HepG2 (cell line): ENCODE measurements at regions of chr22 and their contacts with region 1.

Region 1: GRCh38 chr22:50341977-50342650 is 1.0 kb upstream of the PPP6R2 start:
- DNase-seq: peak; percentile 83
- ATAC-seq: peak; percentile 80
- H3K4me3 ChIP-seq: peak overlapping the region; percentile 81 to 86 (median 83)
- H3K27ac ChIP-seq: peak overlapping the region; percentile 56
- H3K4me1 ChIP-seq: peaks cover 45% of the 10 kb centered on the region
- H3K27me3 ChIP-seq: no peaks in the 10 kb centered on the region
- CTCF ChIP-seq: peak; percentile 93
- EP300 ChIP-seq: 0 out of 4 replicates have a peak, but pooled peaks of 1 of the 2 experiments have one; percentile 17
- POLR2A ChIP-seq: 0 out of 4 replicates have a peak, but pooled peaks of 1 of the 2 experiments have one; percentile 6
- RAD21 ChIP-seq: peak; percentile 92

Region 2: GRCh38 chr22:50244420-50245213 is 97.5 kb before region 1 on chr22 and contains the start of gene TUBGCP6:
- CTCF ChIA-PET with region 1: interaction called, 7 read pairs
- POLR2A ChIA-PET with region 1: interaction called, 7 read pairs
- in situ Hi-C with region 1: no loop called
- intact Hi-C with region 1: loop called (anchors 2 kb)
- DNase-seq: peak; percentile 84
- ATAC-seq: peak; percentile 81
- H3K4me3 ChIP-seq: peak within 1 kb of the TSS; percentile 77 to 98 (median 89)
- H3K27ac ChIP-seq: peak within 1 kb of the TSS; percentile 77
- H3K4me1 ChIP-seq: peaks cover 33% of the 10 kb centered on the region
- H3K27me3 ChIP-seq: no peaks in the 10 kb centered on the region; a peak in 1 of 5 replicates
- CTCF ChIP-seq: peak; percentile 43; the same call in 1 of the 2 replicates
- EP300 ChIP-seq: no peak
- POLR2A ChIP-seq: peak; percentile 71 to 87
- RAD21 ChIP-seq: peak; percentile 39; the same call in 1 of the 2 replicates
- total RNA-seq, gene TUBGCP6: 5.8 and 15.7 TPM in 2 replicates

Region 3: GRCh38 chr22:50250555-50251476 is 91.3 kb before region 1 on chr22 and contains the start of gene HDAC10:
- CTCF ChIA-PET with region 1: interaction called, 11 read pairs
- POLR2A ChIA-PET with region 1: interaction called, 14 read pairs
- in situ Hi-C with region 1: no loop called
- intact Hi-C with region 1: no loop called
- DNase-seq: peak; percentile 56
- ATAC-seq: peak; percentile 83
- H3K4me3 ChIP-seq: peak within 1 kb of the TSS; percentile 68 to 92 (median 84)
- H3K27ac ChIP-seq: peak within 1 kb of the TSS; percentile 76
- H3K4me1 ChIP-seq: peaks cover 45% of the 10 kb centered on the region
- H3K27me3 ChIP-seq: no peaks in the 10 kb centered on the region
- CTCF ChIP-seq: 0 out of 2 replicates have a peak, but pooled peaks have one; percentile 2
- EP300 ChIP-seq: no peak
- POLR2A ChIP-seq: peak; percentile 44 to 75; a peak in 3 of 4 replicates
- RAD21 ChIP-seq: peak; percentile 60
- total RNA-seq, gene HDAC10: 4.0 and 13.9 TPM in 2 replicates

Region 4: GRCh38 chr22:50276143-50276542 is 66.0 kb before region 1 on chr22:
- CTCF ChIA-PET with region 1: interaction called, 125 read pairs
- POLR2A ChIA-PET with region 1: interaction called, 5 read pairs
- in situ Hi-C with region 1: no loop called
- intact Hi-C with region 1: loop called (anchors 2 kb)
- DNase-seq: peak; percentile 16
- ATAC-seq: peak; percentile 27
- H3K4me3 ChIP-seq: no peak overlapping the region
- H3K27ac ChIP-seq: no peak overlapping the region
- H3K4me1 ChIP-seq: peaks cover 11% of the 10 kb centered on the region
- H3K27me3 ChIP-seq: peaks cover 0 to 3% of the 10 kb centered on the region in 2 experiments; a peak in 3 of 5 replicates
- CTCF ChIP-seq: peak; percentile 75
- EP300 ChIP-seq: no peak
- POLR2A ChIP-seq: no peak
- RAD21 ChIP-seq: peak; percentile 21; the same call in 1 of the 2 replicates

Region 5: GRCh38 chr22:50293441-50294318 is 48.4 kb before region 1 on chr22:
- CTCF ChIA-PET with region 1: no interaction called
- POLR2A ChIA-PET with region 1: interaction called, 10 read pairs
- in situ Hi-C with region 1: no loop called
- intact Hi-C with region 1: no loop called
- DNase-seq: peak; percentile 87
- ATAC-seq: peak; percentile 77
- H3K4me3 ChIP-seq: peak overlapping the region; percentile 44 to 74 (median 73); a peak in 5 of 6 replicates
- H3K27ac ChIP-seq: peak overlapping the region; percentile 94
- H3K4me1 ChIP-seq: peaks cover 65% of the 10 kb centered on the region
- H3K27me3 ChIP-seq: no peaks in the 10 kb centered on the region
- CTCF ChIP-seq: peak; percentile 54
- EP300 ChIP-seq: peak; percentile 34 to 71; a peak in 3 of 4 replicates
- POLR2A ChIP-seq: peak; percentile 72 to 76
- RAD21 ChIP-seq: peak; percentile 62

Region 6: GRCh38 chr22:50326959-50327710 is 15.0 kb before region 1 on chr22 and contains the start of gene DENND6B:
- CTCF ChIA-PET with region 1: interaction called, 18 read pairs
- POLR2A ChIA-PET with region 1: interaction called, 38 read pairs
- in situ Hi-C with region 1: no loop called
- intact Hi-C with region 1: no loop called
- DNase-seq: peak; percentile 45
- ATAC-seq: peak; percentile 81
- H3K4me3 ChIP-seq: peak within 1 kb of the TSS; percentile 69 to 83 (median 81)
- H3K27ac ChIP-seq: peak within 1 kb of the TSS; percentile 77
- H3K4me1 ChIP-seq: peaks cover 65% of the 10 kb centered on the region
- H3K27me3 ChIP-seq: no peaks in the 10 kb centered on the region; a peak in 1 of 5 replicates
- CTCF ChIP-seq: peak; percentile 54; the same call in 1 of the 2 replicates
- EP300 ChIP-seq: no peak
- POLR2A ChIP-seq: peak; percentile 75 to 77
- RAD21 ChIP-seq: peak; percentile 99
- total RNA-seq, gene DENND6B: 0.84 and 0.95 TPM in 2 replicates

Region 7: GRCh38 chr22:50399751-50400331 is 57.7 kb after region 1 on chr22:
- CTCF ChIA-PET with region 1: no interaction called
- POLR2A ChIA-PET with region 1: no interaction called
- in situ Hi-C with region 1: no loop called
- intact Hi-C with region 1: loop called (anchors 2 kb)
- DNase-seq: peak; percentile 16
- ATAC-seq: peak; percentile 71
- H3K4me3 ChIP-seq: no peak overlapping the region
- H3K27ac ChIP-seq: peak overlapping the region; percentile 27
- H3K4me1 ChIP-seq: peaks cover 85% of the 10 kb centered on the region
- H3K27me3 ChIP-seq: no peaks in the 10 kb centered on the region
- CTCF ChIP-seq: peak; percentile 82
- EP300 ChIP-seq: no peak
- POLR2A ChIP-seq: no peak
- RAD21 ChIP-seq: peak; percentile 50; the same call in 1 of the 2 replicates

Region 8: GRCh38 chr22:50551160-50551752 is 209.1 kb after region 1 on chr22:
- CTCF ChIA-PET with region 1: no interaction called
- POLR2A ChIA-PET with region 1: no interaction called
- in situ Hi-C with region 1: no loop called
- intact Hi-C with region 1: no loop called
- DNase-seq: no peak
- ATAC-seq: no peak
- H3K4me3 ChIP-seq: no peak overlapping the region
- H3K27ac ChIP-seq: no peak overlapping the region
- H3K4me1 ChIP-seq: peaks cover 17% of the 10 kb centered on the region
- H3K27me3 ChIP-seq: peaks cover 1 to 16% of the 10 kb centered on the region in 2 experiments
- CTCF ChIP-seq: no peak
- EP300 ChIP-seq: no peak
- POLR2A ChIP-seq: no peak
- RAD21 ChIP-seq: no peak